Posterior vena cava (tissue), 2 donors: ENCODE measurements at regions of chr14 and their contacts with region 1.

Region 1: GRCh38 chr14:44113769-44114730 is 393.0 kb downstream of the FSCB start:
- DNase-seq: no peak

Region 2: DNA sequence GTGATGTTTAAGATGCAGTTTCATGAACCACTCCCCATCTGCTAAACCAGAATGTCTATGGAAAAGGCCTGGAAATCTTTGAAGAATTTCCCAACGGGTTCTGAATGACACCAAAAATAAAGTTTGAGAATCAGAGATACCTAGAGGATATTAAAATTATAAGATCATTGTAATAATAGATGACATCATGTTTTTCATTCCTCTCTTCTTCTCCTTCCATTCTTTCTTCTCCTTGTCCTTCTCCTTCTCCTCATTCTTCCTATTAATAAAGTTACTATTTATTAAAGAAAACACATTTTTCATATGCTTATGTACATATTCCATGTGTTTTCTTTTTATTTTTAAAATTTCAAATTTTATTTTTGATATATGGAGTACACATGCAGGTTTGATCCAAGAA is 1057.9 kb before region 1 on chr14:
- intact Hi-C with region 1: no loop called
- DNase-seq: no peak

Region 3: GRCh38 chr14:44041700-44042099 is 72.3 kb before region 1 on chr14:
- intact Hi-C with region 1: loop called in 1 of 2 experiments (anchors 2 kb)
- DNase-seq: no peak

Region 4: DNA sequence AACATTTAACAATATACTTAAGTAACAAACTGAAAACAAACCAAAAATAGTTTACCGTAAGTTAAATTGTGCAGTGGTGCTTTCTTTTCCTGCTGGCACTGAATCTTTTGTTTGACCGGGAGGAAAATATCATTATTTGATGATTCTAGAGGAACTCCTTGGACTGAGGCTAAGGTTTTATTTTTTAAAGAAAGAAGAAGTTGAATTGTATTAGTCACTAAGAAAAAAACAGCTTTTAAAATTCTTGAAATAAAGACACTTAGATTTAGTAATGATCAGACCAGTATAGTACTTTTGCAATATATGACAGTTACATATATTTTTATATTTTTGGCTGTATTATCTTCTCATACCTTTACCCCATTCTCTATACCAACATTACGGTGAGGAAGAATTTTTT is 1128.7 kb after region 1 on chr14:
- intact Hi-C with region 1: no loop called
- DNase-seq: no peak